CD4-positive, alpha-beta T cell (primary cell): ENCODE measurements at regions of chr2 and their contacts with region 1.

Region 1: DNA sequence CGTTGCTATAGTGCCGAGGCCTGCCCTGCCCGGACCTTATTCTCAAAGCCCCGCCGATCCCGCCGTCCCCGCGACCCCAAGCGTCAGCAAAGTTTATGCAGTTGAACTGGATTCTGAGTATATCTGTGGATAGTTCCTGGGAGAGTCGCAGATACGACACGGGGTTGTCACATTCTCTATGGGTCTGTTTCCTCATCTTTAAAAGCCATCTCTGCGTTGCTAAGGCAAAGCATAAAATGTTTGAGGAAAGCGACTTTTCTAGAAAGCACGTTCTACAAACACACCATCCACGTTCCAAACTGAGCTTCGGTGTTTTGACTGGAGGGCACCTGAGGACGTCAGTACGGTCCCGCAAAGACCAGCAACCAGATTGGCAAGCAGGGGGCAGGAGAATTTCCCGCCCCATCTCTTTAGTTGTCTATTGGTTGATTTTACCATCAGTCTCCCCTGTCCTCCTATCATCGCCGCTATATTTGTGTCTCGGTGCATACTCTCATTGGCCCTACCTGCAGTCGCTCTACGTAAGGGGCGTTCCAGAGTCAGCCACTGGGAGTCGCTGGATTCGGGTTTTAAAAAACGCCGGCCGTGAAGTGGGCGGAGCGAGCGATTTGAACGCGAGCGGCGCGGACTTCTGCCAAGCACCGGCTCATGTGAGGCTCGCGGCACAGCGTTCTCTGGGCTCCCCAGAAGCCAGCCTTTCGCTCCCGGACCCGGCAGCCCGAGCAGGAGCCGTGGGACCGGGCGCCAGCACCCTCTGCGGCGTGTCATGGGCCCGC is at the start of gene CENPA:
- DNase-seq: peak; percentile 91 to 99 (median 93)
- ATAC-seq: peak; percentile 98
- H3K4me3 ChIP-seq: peak within 1 kb of the TSS; percentile 65
- H3K4me3 Mint-ChIP-seq: peak within 1 kb of the TSS; percentile 87
- H3K27ac ChIP-seq: peak within 1 kb of the TSS; percentile 23 to 34
- H3K27ac Mint-ChIP-seq: peak within 1 kb of the TSS; percentile 85
- H3K4me1 ChIP-seq: peaks cover 19% of the 10 kb centered on the region
- H3K4me1 Mint-ChIP-seq: peaks cover 11% of the 10 kb centered on the region
- H3K27me3 ChIP-seq: no peaks in the 10 kb centered on the region
- H3K27me3 Mint-ChIP-seq: peaks cover 26% of the 10 kb centered on the region
- CTCF ChIP-seq: peak; percentile 5
- total RNA-seq, gene CENPA: 1.0 to 1.1 TPM

Region 2: GRCh38 chr2:25673300-25674076 is 1112.1 kb before region 1 on chr2 and contains the start of gene DTNB:
- CTCF ChIA-PET with region 1: no interaction called
- POLR2A ChIA-PET with region 1: no interaction called
- intact Hi-C with region 1: loop called in 1 of 2 experiments (anchors 10 kb)
- DNase-seq: peak; percentile 58 to 92 (median 76)
- ATAC-seq: peak; percentile 75
- H3K4me3 ChIP-seq: peak within 1 kb of the TSS; percentile 84
- H3K4me3 Mint-ChIP-seq: peak within 1 kb of the TSS; percentile 91
- H3K27ac ChIP-seq: peak within 1 kb of the TSS; percentile 43 to 66
- H3K27ac Mint-ChIP-seq: peak within 1 kb of the TSS; percentile 85
- H3K4me1 ChIP-seq: peaks cover 23% of the 10 kb centered on the region
- H3K4me1 Mint-ChIP-seq: peaks cover 35% of the 10 kb centered on the region
- H3K27me3 ChIP-seq: peaks cover 0 to 2% of the 10 kb centered on the region in 2 experiments
- H3K27me3 Mint-ChIP-seq: no peaks in the 10 kb centered on the region
- CTCF ChIP-seq: no peak
- total RNA-seq, gene DTNB: 30.1 to 33.6 TPM

Region 3: DNA sequence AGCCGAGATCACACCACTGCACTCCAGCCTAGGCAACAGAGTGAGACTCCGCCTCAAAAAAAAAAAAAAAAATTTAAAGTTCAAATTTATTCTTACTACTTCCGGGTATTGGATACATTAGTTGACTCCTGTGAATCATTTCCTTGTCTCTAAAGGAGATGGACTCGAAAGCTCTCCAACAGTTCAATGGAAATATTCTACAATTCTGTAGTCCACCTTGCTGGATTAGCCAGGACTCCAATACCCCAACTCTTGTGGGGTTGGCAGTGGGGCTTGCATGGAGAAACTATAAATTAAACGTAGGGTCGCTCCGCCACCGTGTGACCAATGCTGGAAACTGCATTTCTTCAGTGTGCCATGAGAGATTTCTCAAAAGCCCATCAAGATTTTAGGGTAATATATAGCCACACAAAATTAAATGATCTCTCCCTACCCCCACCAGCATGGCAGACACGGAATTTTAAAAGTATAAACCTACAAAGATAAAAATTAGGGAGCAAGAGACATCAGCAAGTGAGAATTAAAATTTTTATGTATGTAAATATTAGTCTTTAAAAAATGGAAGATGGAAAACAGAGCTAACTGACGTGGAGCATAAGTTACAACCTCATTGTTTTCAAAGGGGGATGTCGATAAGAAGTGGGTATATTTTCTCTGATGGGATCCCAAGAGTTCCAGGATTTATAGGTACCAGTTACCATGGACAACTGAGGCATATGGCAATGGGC is 640.5 kb before region 1 on chr2:
- CTCF ChIA-PET with region 1: no interaction called
- POLR2A ChIA-PET with region 1: no interaction called
- intact Hi-C with region 1: no loop called
- DNase-seq: peak; percentile 31 to 77 (median 50)
- ATAC-seq: peak; percentile 80
- H3K4me3 ChIP-seq: no peak overlapping the region
- H3K4me3 Mint-ChIP-seq: no peak overlapping the region
- H3K27ac ChIP-seq: no peak overlapping the region
- H3K27ac Mint-ChIP-seq: no peak overlapping the region
- H3K4me1 ChIP-seq: no peaks in the 10 kb centered on the region
- H3K4me1 Mint-ChIP-seq: no peaks in the 10 kb centered on the region
- H3K27me3 ChIP-seq: peaks cover 3 to 10% of the 10 kb centered on the region in 2 experiments
- H3K27me3 Mint-ChIP-seq: peaks cover 11% of the 10 kb centered on the region
- CTCF ChIP-seq: peak; percentile 76

Region 4: GRCh38 chr2:26764078-26764887 is 21.3 kb before region 1 on chr2 and contains the start of gene SLC35F6:
- CTCF ChIA-PET with region 1: interaction called, 4 read pairs
- POLR2A ChIA-PET with region 1: interaction called, 8 read pairs
- intact Hi-C with region 1: loop called (anchors 1 kb)
- DNase-seq: peak; percentile 64 to 94 (median 79)
- ATAC-seq: peak; percentile 95
- H3K4me3 ChIP-seq: peak within 1 kb of the TSS; percentile 100
- H3K4me3 Mint-ChIP-seq: peak within 1 kb of the TSS; percentile 97
- H3K27ac ChIP-seq: peak within 1 kb of the TSS; percentile 73 to 85
- H3K27ac Mint-ChIP-seq: peak within 1 kb of the TSS; percentile 81
- H3K4me1 ChIP-seq: peaks cover 53% of the 10 kb centered on the region
- H3K4me1 Mint-ChIP-seq: peaks cover 40% of the 10 kb centered on the region
- H3K27me3 ChIP-seq: no peaks in the 10 kb centered on the region
- H3K27me3 Mint-ChIP-seq: no peaks in the 10 kb centered on the region
- CTCF ChIP-seq: no peak
- total RNA-seq, gene SLC35F6: 32.0 to 34.2 TPM

Region 5: GRCh38 chr2:26820932-26821331 is 35.3 kb after region 1 on chr2:
- CTCF ChIA-PET with region 1: no interaction called
- POLR2A ChIA-PET with region 1: no interaction called
- intact Hi-C with region 1: no loop called
- DNase-seq: no peak
- ATAC-seq: no peak
- H3K4me3 ChIP-seq: no peak overlapping the region
- H3K4me3 Mint-ChIP-seq: no peak overlapping the region
- H3K27ac ChIP-seq: no peak overlapping the region
- H3K27ac Mint-ChIP-seq: no peak overlapping the region
- H3K4me1 ChIP-seq: no peaks in the 10 kb centered on the region
- H3K4me1 Mint-ChIP-seq: no peaks in the 10 kb centered on the region
- H3K27me3 ChIP-seq: peaks cover 0 to 3% of the 10 kb centered on the region in 2 experiments
- H3K27me3 Mint-ChIP-seq: peaks cover 25% of the 10 kb centered on the region
- CTCF ChIP-seq: no peak